Stomach (tissue), 19 donors: ENCODE measurements at regions of chr17 and their contacts with region 1.

Region 1: GRCh38 chr17:42754782-42755181 is 6.2 kb upstream of the RAMP2 start:
- DNase-seq: peak in 1 of 2 donors; percentile 9
- H3K4me3 ChIP-seq: no peak overlapping the region
- H3K27ac ChIP-seq: no peak overlapping the region
- H3K4me1 ChIP-seq: peaks cover 0 to 20% (median 10%) of the 10 kb centered on the region in 4 donors
- H3K27me3 ChIP-seq: peaks cover 0 to 6% (median 0%) of the 10 kb centered on the region in 3 donors
- CTCF ChIP-seq: no peak
- EP300 ChIP-seq: no peak
- POLR2A ChIP-seq: no peak

Region 2: GRCh38 chr17:42720996-42721583 is 33.7 kb before region 1 on chr17:
- intact Hi-C with region 1: loop called (anchors 5 kb)
- DNase-seq: peak in 1 of 2 donors; percentile 90
- H3K4me3 ChIP-seq: no peak overlapping the region
- H3K27ac ChIP-seq: no peak overlapping the region
- H3K4me1 ChIP-seq: no peaks in the 10 kb centered on the region
- H3K27me3 ChIP-seq: no peaks in the 10 kb centered on the region
- CTCF ChIP-seq: peak in 5 of 7 experiments; percentile 33 to 74 (median 63)
- EP300 ChIP-seq: no peak
- POLR2A ChIP-seq: no peak

Region 3: DNA sequence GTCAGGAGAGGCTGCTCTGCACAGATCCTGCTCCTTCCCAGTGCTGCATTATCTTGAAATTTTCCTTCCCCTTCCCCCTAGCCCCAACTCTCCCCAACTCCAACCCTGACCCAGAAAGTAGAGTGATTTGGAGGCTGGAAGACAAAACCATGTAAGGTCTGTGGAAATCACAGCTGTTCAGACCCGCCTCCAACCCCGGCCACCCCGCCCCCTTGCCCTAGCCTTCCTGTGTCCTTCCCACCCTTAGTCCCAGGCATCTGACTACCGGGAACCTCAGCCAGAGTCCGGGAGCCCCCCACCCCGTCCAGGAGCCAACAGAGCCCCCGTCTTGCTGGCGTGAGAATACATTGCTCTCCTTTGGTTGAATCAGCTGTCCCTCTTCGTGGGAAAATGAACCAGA is 96.2 kb after region 1 on chr17 and contains the start of gene AOC3:
- intact Hi-C with region 1: no loop called
- DNase-seq: peak in 1 of 2 donors; percentile 69
- H3K4me3 ChIP-seq: peak within 1 kb of the TSS; percentile 25 to 49 (median 43)
- H3K27ac ChIP-seq: peak within 1 kb of the TSS in 4 of 5 donors; percentile 66 to 86 (median 80)
- H3K4me1 ChIP-seq: peaks cover 22 to 63% (median 40%) of the 10 kb centered on the region in 4 donors
- H3K27me3 ChIP-seq: no peaks in the 10 kb centered on the region
- CTCF ChIP-seq: no peak
- EP300 ChIP-seq: no peak
- POLR2A ChIP-seq: no peak
- total RNA-seq, gene AOC3: 20.9 to 67.9 (median 42.0) TPM

Region 4: DNA sequence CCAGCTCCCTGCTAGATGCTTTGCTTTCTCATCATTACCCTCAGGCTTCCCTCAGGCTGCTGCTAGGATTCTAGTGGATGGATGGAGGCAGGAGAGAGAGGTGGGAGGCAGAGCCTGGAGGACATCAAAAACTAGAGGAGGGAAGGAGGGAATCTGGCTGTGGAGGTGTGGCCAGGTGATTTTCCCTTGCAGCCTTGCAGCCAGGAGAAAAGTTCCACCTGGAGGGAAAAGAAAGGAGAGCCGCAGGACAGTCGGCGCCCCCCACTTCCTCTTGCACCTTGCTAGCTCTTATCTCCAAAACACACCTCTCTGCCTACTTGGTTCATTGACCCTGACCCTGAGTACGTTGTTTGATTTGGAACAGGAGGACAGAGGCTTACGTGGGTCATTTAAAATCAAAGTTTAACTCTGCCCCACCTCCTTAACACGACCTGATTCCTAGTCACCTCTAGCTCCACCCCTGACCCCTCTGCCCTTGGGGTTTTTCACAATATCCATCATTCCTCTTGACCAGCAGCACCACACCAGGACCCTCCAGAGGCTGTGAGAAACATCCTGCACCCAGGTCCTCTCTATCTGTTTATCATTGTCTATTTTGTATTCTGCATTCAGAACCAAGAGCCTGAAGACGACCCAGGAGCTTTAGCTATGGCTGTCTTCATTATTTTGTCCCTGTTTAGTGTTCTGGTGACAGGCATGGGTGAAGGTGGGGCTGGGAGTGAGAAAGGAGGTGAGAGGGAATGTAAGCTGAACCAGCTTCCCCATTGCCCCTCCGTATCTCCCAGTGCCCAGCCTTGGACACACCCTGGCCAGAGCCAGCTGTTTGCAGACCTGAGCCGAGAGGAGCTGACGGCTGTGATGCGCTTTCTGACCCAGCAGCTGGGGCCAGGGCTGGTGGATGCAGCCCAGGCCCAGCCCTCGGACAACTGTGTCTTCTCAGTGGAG is 112.1 kb after region 1 on chr17:
- intact Hi-C with region 1: no loop called
- DNase-seq: peak in 1 of 2 donors; percentile 47
- H3K4me3 ChIP-seq: no peak overlapping the region
- H3K27ac ChIP-seq: peak overlapping the region in 1 of 5 donors; percentile 24
- H3K4me1 ChIP-seq: peaks cover 8 to 36% (median 25%) of the 10 kb centered on the region in 4 donors
- H3K27me3 ChIP-seq: no peaks in the 10 kb centered on the region
- CTCF ChIP-seq: no peak
- EP300 ChIP-seq: no peak
- POLR2A ChIP-seq: no peak